Left lung (tissue), 14 donors: ENCODE measurements at regions of chr18 and their contacts with region 1.

Region 1: GRCh38 chr18:3983351-3983969 is 471.6 kb downstream of the DLGAP1 start:
- DNase-seq: no peak
- ATAC-seq: peak; percentile 38
- H3K4me3 ChIP-seq: no peak overlapping the region
- H3K27ac ChIP-seq: no peak overlapping the region
- H3K4me1 ChIP-seq: peaks cover 0 to 5% of the 10 kb centered on the region in 2 donors
- H3K27me3 ChIP-seq: no peaks in the 10 kb centered on the region
- CTCF ChIP-seq: no peak

Region 2: GRCh38 chr18:3771121-3771971 is 212.1 kb before region 1 on chr18:
- intact Hi-C with region 1: loop called in 1 of 2 experiments (anchors 10 kb)
- DNase-seq: peak; percentile 84 to 96 (median 90)
- ATAC-seq: peak; percentile 100
- H3K4me3 ChIP-seq: peak overlapping the region; percentile 6 to 16
- H3K27ac ChIP-seq: peak overlapping the region; percentile 39 to 72
- H3K4me1 ChIP-seq: peaks cover 5 to 18% of the 10 kb centered on the region in 2 donors
- H3K27me3 ChIP-seq: no peaks in the 10 kb centered on the region
- CTCF ChIP-seq: peak; percentile 93 to 97